Activated T-helper 1 cell treated with anti-CD3 and anti-CD28 coated beads, Interleukin-12 subunit alpha, Interleukin-12 subunit beta, Interleukin-2, Interleukin-4 antibody, amounts not matched to agents 30 ng/mL and 10 ng/mL and 1 ng/mL, durations not matched to agents 14 hours and 24 hours and 36 hours (primary cell): ENCODE measurements at regions of chr6 and their contacts with region 1.

Region 1: DNA sequence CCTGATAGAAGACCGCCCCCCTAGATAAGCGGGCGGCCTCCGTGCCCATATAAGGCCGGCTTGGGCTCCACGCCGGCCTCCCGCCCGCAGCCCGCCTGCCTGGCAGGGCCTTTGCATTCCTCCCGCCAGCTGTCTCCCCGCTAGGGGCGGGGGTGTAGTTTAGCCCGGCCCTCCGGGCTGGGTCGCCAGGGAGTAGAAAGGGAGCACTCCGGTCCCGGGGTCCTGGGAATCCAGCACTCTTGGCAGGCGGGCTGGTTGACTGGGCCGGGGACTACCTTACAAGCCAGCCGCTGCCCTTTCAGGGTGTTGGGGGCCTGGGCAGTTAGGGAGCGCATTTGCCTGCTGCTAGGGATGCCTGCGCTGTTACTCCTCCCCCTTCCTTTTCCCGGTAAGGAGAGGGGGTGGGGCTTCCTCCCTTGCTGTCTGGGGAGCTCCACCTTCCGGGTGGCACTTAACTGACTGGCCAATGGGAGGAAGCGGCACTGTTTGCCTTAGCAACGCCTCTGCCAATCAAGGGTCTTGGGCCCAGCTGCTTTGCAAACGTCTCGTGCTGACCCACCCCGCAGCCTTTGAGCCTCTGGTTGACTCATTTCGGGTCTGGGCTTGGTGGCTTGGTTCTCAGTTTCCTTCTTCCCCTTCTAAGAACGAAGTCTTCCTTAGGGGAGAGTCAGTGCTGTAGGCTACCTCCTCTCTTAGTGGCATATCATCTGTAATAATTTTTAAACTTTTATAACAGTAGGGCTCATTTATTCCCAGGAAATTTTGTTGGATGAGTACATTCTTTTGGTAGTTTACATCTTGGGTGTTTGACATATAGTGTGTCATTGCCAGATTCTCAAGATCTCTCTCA is 3.4 kb downstream of the SRF start:
- DNase-seq: peak; percentile 96
- H3K4me3 Mint-ChIP-seq: peak overlapping the region; percentile 94
- H3K27ac Mint-ChIP-seq: peak overlapping the region; percentile 82
- H3K4me1 Mint-ChIP-seq: peaks cover 44% of the 10 kb centered on the region
- H3K27me3 Mint-ChIP-seq: peaks cover 2% of the 10 kb centered on the region

Region 2: DNA sequence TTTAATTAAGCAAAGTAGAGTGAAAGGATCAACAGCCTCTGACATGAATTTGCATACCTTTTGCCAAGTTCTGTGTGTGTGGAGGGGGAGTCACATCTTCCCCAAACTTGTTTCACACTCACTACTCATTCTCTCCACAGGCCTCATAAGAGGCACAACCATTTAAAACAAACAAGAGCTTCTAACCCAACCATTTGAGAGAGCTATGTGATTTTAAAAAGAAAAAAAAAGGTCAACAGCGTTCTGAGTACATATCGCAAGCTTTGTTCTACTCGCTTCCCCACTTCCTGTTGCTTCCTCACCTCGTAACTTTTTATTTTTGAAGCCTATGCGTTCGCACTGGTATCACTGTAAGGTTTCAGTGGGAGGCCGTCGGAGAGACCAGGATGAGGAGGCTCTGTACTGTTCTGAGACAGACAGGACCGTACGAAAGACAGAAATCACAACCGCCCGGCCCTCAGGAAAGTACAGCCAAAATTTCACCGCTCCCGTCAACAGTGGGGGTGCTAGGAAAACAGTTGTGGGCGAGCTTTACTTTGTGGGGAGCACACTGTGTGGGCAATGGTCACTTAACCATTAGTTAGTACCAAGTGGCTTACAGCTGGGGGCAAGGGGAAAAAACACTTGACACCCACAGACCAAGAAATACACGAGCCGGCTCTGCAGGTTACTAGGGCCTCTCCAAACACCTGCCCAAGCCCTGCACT is 784.1 kb before region 1 on chr6:
- intact Hi-C with region 1: loop called (anchors 1 kb)
- DNase-seq: peak; percentile 60
- H3K4me3 Mint-ChIP-seq: peak overlapping the region; percentile 78
- H3K27ac Mint-ChIP-seq: peak overlapping the region; percentile 99
- H3K4me1 Mint-ChIP-seq: peaks cover 92% of the 10 kb centered on the region
- H3K27me3 Mint-ChIP-seq: no peaks in the 10 kb centered on the region

Region 3: DNA sequence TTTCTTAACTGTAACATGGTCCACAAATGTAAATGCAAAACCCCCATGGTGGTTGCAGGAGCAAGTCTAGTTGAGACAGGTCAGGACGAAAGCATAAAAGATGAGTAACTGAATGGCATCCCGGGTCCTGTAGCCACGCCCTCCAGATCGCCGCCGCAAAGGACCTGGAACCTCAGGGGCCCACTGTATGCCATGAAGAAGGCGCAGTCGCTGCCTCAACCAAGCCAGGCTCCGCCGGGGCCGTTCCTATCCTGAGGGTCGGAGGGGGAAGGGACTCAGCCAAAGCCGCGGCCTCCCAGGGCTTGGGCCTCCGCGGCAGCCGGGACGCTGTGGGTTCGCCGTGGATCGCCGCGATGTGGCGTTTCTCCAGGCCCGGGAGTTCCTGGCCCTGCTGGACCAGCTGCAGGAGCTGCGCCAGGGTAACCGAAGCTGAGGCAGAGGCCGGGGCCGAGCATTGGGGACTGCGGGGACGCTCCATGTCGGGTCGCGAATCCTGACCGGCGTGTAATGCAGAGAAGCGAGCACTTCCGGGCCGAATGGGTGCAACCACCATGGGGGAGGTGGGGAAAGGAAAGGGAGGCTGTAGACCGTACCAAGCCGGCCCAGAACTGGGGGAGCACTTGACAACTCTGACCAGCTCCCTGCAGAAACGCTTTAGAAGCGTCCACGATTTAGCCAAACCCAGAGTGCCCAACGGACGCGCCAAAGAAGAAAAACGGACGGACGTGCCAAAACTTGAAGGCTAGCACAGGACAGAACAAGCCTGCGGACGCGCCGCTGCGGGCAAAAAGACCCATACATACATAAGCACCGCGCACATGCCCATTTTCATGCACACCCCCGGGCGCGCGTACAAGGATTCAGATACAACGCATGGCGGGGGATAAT is 283.9 kb before region 1 on chr6:
- intact Hi-C with region 1: loop called (anchors 1 kb)
- DNase-seq: peak; percentile 86
- H3K4me3 Mint-ChIP-seq: peak overlapping the region; percentile 84
- H3K27ac Mint-ChIP-seq: peak overlapping the region; percentile 89
- H3K4me1 Mint-ChIP-seq: peaks cover 12% of the 10 kb centered on the region
- H3K27me3 Mint-ChIP-seq: no peaks in the 10 kb centered on the region

Region 4: DNA sequence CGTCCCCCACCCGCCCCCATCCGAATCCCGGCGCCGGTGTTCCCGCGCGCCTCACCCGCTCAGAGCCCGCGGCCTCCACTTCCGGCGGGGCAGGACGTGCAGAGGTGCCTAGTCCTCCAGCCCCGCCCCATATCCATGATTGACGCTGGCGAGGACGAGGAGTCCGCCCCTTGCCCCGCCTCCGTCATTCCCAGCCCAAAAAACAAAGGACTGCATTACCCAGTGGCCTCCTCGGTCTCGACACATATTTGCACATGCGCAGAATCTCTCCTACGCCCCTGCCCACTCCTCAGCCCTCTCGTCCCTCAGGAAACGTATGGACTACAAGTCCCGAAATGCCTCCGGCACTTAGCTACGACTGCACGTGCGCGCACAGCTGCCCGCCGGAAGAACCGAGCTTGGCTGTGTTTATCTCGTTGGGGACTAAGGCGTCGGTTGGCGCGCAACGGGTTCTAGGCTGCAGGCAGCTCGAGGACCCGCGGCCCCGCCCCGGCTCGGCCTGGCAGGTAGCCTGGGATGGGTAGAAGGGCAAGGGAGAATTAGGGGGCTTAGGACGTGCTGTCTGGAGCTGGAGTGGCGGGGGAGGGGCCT is 160.6 kb before region 1 on chr6 and contains the starts of genes KLHDC3 and MEA1:
- intact Hi-C with region 1: loop called (anchors 1 kb)
- DNase-seq: peak; percentile 99
- H3K4me3 Mint-ChIP-seq: peak within 1 kb of the TSS; percentile 93
- H3K27ac Mint-ChIP-seq: peak within 1 kb of the TSS; percentile 78
- H3K4me1 Mint-ChIP-seq: peaks cover 41% of the 10 kb centered on the region
- H3K27me3 Mint-ChIP-seq: peaks cover 2% of the 10 kb centered on the region
- total RNA-seq, gene KLHDC3: 76.6 and 77.0 TPM in 2 replicates
- total RNA-seq, gene MEA1: 89.3 and 92.7 TPM in 2 replicates

Region 5: GRCh38 chr6:43240950-43241349 is 66.5 kb after region 1 on chr6:
- intact Hi-C with region 1: no loop called
- DNase-seq: no peak
- H3K4me3 Mint-ChIP-seq: no peak overlapping the region
- H3K27ac Mint-ChIP-seq: no peak overlapping the region
- H3K4me1 Mint-ChIP-seq: peaks cover 15% of the 10 kb centered on the region
- H3K27me3 Mint-ChIP-seq: peaks cover 24% of the 10 kb centered on the region

Region 6: DNA sequence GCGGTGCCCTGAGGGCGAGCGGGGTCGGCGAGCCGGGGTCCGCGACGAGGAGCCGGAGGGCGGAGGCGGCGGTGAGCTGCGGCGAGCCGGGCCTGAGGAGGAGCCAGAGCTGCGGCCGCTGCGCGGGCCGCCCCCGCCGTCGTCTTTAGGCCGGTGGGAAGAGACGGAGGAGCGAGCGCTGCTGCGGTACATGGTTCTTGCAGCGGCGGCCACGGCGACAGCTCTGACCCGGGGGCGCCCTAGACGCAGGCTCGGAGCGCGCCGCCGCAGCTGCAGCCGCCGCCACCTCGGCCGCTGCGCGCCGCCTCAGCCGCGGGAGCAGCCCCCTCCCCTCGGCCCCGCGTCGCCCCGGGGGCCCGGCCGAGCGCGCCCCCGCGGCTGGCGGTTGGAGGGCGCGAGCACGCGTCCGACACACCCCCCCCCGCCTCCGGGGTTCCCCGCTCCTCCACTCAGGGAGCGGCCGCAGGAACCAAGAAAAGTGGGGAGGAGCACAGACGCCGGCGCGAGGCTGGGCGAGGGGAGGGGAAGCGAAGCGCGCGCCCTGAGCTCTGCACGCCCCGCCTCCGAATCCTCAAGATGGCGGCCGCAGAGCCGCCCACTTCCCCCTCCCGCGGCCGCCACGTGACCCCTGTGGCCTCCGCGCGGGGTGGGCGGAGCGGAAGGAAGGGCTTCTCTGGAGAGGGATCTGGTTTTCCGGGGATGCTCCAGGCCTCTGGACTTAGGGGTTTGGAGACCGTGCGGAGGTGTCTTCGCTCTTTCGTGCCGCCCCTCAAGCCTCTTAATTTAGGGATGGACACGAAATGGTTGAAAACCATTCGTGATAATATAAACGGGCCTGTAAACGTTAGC is 194.9 kb after region 1 on chr6 and contains the start of gene ZNF318:
- intact Hi-C with region 1: loop called (anchors 1 kb)
- DNase-seq: peak; percentile 93
- H3K4me3 Mint-ChIP-seq: peak within 1 kb of the TSS; percentile 86
- H3K27ac Mint-ChIP-seq: peak within 1 kb of the TSS; percentile 91
- H3K4me1 Mint-ChIP-seq: peaks cover 36% of the 10 kb centered on the region
- H3K27me3 Mint-ChIP-seq: peaks cover 2% of the 10 kb centered on the region
- total RNA-seq, gene ZNF318: 9.1 and 9.7 TPM in 2 replicates

Region 7: DNA sequence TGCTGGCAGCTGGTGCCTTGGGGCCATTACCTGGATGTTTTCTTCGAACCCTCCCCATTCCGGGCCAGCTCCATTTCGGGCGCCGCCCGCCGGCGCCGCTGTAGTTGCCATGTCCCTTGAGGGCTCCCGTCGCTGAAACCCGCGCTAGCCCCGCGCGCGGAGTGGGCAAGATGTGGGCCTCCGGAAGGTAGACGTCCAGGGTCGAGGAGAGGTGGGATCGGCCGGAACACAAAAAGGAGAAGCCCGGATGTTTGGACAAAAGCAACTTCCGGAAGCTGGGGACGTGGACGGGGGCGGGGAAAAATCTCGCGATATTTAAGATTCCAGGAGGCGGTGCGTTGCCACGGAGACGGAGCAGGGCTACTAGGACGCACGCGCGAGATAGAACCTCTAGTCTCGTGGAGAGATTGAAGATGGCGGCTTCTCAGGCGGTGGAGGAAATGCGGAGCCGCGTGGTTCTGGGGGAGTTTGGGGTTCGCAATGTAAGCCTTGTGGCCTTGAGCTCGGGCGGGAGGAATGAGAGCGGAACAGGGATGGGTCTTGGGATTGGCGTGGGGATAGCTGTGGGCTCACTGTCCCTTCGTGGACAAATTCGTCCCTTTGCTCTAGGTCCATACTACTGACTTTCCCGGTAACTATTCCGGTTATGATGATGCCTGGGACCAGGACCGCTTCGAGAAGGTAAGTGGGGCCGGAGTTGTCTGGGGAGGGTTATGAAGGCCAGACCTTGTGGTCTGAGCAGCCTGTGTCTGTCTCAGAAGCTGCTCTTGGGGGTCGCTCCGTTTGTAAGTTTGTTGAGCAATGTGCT is 342.4 kb after region 1 on chr6 and contains the starts of genes POLR1C and YIPF3:
- intact Hi-C with region 1: loop called (anchors 1 kb)
- DNase-seq: peak; percentile 95
- H3K4me3 Mint-ChIP-seq: no peak within 1 kb of the TSS
- H3K27ac Mint-ChIP-seq: no peak within 1 kb of the TSS
- H3K4me1 Mint-ChIP-seq: peaks cover 20% of the 10 kb centered on the region
- H3K27me3 Mint-ChIP-seq: no peaks in the 10 kb centered on the region
- total RNA-seq, gene POLR1C: 85.8 and 98.0 TPM in 2 replicates
- total RNA-seq, gene YIPF3: 60.2 and 62.5 TPM in 2 replicates